ENCODE measurements at regions of chr10 and their contacts with region 1.

Region 1: DNA sequence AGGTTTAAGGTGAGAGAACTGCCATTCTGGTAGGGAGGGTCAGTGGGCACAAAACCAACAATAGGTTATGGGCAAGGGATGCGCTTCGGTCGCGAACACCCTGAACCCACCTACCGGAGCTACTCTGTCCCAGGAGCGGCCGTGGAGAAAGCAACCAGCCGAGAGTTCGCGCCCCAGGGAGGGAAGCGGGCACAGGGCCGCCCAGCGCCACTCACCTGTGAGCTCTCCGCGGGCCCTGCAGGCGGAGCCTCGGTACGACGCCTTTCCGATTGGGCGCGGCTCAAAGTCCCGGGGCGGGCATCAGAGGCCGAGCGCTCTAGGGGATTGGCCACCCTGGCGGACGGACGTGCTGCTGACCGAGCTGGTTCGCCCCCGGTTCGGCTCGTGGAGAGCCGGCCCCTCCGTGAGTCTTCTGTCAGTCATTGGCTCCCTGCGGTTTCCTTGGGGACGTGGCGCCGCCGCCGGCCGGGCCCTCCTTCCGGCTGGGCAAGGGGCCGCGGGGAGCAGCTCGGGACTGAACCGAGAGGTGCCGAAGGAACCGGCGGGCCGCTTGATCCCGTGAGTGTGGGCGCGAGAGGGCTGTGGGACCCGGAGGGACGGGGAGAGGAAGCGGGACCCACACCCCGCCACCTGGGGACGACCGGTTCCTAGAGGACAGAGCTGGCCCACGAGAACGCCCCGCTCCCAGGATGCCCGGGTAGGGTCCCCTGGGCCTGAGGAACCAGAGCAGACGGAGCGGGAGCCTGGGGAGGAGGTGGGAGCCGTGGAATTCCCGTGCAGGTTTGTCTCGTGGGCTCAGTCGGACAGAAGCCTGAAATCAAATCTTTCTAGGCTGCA is at the start of gene ENTPD7:
- DNase-seq: peak; percentile 91
- ATAC-seq: peak; percentile 94
- H3K4me3 ChIP-seq: peak within 1 kb of the TSS; percentile 91
- H3K27ac ChIP-seq: no peak within 1 kb of the TSS
- H3K4me1 ChIP-seq: peaks cover 24% of the 10 kb centered on the region
- H3K27me3 ChIP-seq: no peaks in the 10 kb centered on the region
- CTCF ChIP-seq: no peak
- total RNA-seq, gene ENTPD7: 6.8 and 7.8 TPM in 2 replicates

Region 2: GRCh38 chr10:99620713-99621453 is 38.4 kb before region 1 on chr10:
- CTCF ChIA-PET with region 1: no interaction called
- POLR2A ChIA-PET with region 1: no interaction called
- intact Hi-C with region 1: loop called (anchors 5 kb)
- DNase-seq: peak; percentile 85
- ATAC-seq: peak; percentile 84
- H3K4me3 ChIP-seq: peak overlapping the region; percentile 80
- H3K27ac ChIP-seq: peak overlapping the region; percentile 98
- H3K4me1 ChIP-seq: peaks cover 24% of the 10 kb centered on the region; the same call in 1 of the 2 replicates
- H3K27me3 ChIP-seq: no peaks in the 10 kb centered on the region
- CTCF ChIP-seq: no peak

Region 3: DNA sequence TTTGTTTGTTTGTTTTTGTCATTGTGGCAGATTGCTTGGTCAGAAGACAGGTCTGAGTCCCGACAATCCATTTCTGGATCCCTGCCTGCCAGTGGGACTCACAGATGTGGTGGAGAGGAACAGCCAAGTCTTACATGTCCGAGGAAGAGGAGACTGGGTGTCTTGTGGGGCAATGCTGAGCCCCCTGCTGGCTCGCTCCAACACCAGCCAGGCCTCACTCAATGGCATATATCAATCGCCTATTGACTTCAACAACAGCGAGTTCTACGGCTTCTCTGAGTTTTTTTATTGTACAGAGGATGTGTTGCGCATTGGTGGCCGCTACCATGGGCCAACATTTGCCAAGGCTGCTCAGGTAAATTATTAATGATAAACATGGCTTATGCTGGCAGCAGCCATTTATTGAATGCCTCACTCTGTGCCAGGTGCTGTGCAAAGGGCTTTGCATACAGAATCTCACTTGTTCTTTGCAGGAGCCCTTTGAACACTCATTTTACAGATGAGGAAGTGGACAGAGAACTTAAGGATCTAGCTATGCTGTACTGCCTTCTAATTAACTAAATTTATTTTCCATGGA is 39.3 kb after region 1 on chr10:
- CTCF ChIA-PET with region 1: no interaction called
- POLR2A ChIA-PET with region 1: interaction called, 11 read pairs
- intact Hi-C with region 1: no loop called
- DNase-seq: no peak
- ATAC-seq: no peak
- H3K4me3 ChIP-seq: no peak overlapping the region
- H3K27ac ChIP-seq: no peak overlapping the region
- H3K4me1 ChIP-seq: no peaks in the 10 kb centered on the region
- H3K27me3 ChIP-seq: no peaks in the 10 kb centered on the region
- CTCF ChIP-seq: peak; percentile 34; the same call in 1 of the 2 replicates

Measured in PC-3 (cell line).